Lower leg skin (tissue), 4 donors: ENCODE measurements at regions of chr15 and their contacts with region 1.

Region 1: DNA sequence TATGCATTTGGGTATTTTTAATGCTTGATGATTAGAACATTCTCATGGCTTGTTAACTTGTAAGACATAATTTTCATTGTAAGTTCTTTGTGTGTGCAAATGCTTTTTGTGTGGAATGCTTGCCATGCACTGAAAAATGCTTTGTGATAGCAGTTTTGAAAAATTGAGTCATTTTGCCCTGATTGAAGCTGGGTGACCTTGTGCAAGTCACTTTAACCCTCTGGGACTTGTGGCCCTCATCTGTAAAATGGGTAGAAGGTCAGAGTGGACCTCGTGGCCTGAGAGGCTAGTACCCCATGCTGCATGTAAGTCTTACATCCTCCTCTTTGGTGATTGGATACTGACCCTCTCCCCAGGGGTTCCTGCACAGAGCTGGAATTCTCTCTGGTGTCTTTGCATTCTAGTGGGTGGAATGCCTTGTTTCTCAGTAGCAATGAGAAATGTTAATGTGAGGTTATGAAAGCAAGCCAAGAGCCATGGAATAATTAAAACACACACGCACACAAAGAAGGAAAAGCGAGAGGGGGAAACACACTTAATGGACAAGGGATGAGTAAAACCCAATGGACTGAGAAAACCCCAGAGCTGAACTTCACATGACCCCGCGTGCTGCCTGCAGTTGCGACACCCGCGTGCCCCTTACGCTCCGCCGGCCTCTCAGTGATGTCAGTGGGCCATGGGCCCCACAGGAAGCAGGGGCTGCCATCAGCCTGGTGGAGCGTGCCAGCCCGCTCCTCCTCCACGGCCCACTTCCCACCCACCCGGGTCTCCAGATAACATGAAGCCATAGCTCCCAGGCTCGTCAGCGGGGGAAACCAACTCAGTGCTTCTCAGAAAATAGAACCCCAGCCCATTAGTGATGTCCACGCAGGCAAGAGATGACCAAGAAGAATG is 44.0 kb downstream of the SMAD3 start:
- DNase-seq: peak in 1 of 2 donors; percentile 93
- H3K4me3 ChIP-seq: no peak overlapping the region
- CTCF ChIP-seq: no peak
- POLR2A ChIP-seq: no peak

Region 2: DNA sequence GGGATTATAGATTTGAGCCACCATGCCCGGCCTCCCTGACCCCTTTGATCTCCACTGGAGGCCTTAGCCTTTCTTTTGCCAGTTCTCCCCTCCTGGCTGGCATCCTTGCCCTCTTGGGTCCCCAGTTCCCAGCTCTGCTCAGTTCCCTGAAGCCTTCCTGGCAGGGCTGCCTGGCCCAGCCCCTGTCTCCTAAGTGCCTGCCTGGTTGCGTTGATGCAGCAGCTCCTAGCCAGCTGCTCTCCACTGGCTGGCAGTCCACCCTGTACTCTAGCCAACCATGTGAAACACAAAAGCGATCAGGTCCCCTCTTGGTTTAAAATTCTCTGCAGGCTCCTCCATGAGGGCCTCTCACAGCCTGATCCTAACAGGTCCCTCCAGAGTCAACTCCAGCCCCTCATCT is 1055.4 kb before region 1 on chr15:
- intact Hi-C with region 1: loop called (anchors 10 kb)
- DNase-seq: no peak
- H3K4me3 ChIP-seq: no peak overlapping the region
- CTCF ChIP-seq: no peak
- POLR2A ChIP-seq: no peak

Region 3: DNA sequence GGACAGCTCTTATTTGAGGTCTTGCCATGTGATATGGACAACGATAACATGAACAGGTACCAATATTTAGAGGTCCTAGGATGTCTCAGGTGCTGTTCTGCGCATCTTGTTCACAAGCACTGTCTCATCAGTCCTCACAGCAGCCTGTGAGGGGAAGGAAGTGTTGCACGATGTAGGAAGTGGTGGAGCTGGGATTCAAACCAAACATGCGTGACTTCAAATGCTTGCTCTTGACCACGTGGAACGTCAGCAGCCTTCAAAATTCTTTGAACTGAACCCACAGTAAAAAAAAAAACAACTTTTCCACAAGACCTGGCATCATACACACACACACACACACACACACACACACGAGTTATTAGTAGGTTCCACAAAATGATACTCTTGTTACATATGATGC is 197.4 kb before region 1 on chr15:
- intact Hi-C with region 1: no loop called
- DNase-seq: peak in 1 of 2 donors; percentile 62
- H3K4me3 ChIP-seq: no peak overlapping the region
- CTCF ChIP-seq: no peak
- POLR2A ChIP-seq: no peak